Activated CD4-positive, alpha-beta memory T cell treated with anti-CD3 and anti-CD28 coated beads, Interleukin-2, amount 10 ng/mL, durations not matched to agents 7 days and 5 days (primary cell): ENCODE measurements at regions of chr11 and their contacts with region 1.

Region 1: DNA sequence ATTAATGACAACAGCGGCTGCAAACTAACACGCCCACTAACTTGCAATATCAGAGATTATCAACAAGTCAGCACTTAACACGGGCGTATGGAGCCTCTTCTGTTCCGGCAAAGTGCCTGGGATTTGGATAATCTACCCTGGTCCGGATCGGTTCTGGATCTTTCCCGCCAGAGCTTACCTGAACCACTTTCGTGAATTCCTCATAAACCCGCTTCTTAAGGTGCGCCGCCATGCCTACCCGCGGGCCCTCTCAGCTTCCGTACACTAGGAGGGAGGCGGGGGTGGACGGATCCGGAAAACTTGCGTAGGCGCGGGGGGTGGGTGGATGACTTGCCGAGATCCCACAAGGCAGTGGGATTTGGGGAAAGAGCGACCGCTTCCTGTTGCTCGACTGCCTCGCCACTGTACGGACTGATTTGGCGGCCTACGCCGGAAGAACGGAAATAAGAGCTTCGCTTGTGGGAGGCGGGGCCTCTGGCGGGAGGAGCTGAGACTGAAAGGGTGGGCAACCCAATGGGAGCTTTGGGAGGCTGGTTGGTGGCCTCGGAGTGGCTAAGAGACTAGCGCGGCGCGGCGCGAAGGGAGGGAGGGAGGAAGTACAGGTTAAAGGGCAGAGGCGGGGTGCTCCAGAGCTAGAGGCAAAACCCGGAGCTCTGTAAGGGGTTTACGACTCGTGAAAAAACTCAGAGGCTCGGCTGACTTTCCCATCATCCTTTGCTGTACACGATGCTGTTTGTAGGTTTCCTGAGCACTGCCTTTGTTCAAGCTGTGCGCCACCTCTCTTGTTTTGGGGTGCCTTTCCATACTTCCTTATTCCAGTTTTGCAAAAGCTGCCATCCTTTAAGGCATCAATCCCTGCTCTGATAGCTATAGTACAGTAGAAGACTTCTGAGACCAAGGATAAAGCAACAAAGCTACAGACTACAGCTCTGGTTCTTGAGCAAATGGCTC is at the start of gene INTS4:
- DNase-seq: peak; percentile 99
- H3K4me3 Mint-ChIP-seq: peak within 1 kb of the TSS; percentile 92
- H3K27ac Mint-ChIP-seq: peak within 1 kb of the TSS; percentile 82
- H3K4me1 Mint-ChIP-seq: peaks cover 29% of the 10 kb centered on the region
- H3K27me3 Mint-ChIP-seq: no peaks in the 10 kb centered on the region
- total RNA-seq, gene INTS4: 51.2 to 52.0 TPM

Region 2: GRCh38 chr11:77820563-77821348 is 173.9 kb before region 1 on chr11 and contains the starts of genes AAMDC and RSF1:
- CTCF ChIA-PET with region 1: interaction called, 14 read pairs
- POLR2A ChIA-PET with region 1: interaction called, 31 read pairs
- DNase-seq: peak; percentile 97
- H3K4me3 Mint-ChIP-seq: peak within 1 kb of the TSS; percentile 97
- H3K27ac Mint-ChIP-seq: peak within 1 kb of the TSS; percentile 94
- H3K4me1 Mint-ChIP-seq: peaks cover 33% of the 10 kb centered on the region
- H3K27me3 Mint-ChIP-seq: no peaks in the 10 kb centered on the region
- total RNA-seq, gene AAMDC: 14.4 to 15.6 TPM
- total RNA-seq, gene RSF1: 58.6 to 62.5 TPM

Region 3: GRCh38 chr11:77879218-77879617 is 115.5 kb before region 1 on chr11:
- CTCF ChIA-PET with region 1: no interaction called
- POLR2A ChIA-PET with region 1: no interaction called
- DNase-seq: peak; percentile 29
- H3K4me3 Mint-ChIP-seq: no peak overlapping the region
- H3K27ac Mint-ChIP-seq: peak overlapping the region; percentile 67
- H3K4me1 Mint-ChIP-seq: peaks cover 13% of the 10 kb centered on the region
- H3K27me3 Mint-ChIP-seq: no peaks in the 10 kb centered on the region

Region 4: DNA sequence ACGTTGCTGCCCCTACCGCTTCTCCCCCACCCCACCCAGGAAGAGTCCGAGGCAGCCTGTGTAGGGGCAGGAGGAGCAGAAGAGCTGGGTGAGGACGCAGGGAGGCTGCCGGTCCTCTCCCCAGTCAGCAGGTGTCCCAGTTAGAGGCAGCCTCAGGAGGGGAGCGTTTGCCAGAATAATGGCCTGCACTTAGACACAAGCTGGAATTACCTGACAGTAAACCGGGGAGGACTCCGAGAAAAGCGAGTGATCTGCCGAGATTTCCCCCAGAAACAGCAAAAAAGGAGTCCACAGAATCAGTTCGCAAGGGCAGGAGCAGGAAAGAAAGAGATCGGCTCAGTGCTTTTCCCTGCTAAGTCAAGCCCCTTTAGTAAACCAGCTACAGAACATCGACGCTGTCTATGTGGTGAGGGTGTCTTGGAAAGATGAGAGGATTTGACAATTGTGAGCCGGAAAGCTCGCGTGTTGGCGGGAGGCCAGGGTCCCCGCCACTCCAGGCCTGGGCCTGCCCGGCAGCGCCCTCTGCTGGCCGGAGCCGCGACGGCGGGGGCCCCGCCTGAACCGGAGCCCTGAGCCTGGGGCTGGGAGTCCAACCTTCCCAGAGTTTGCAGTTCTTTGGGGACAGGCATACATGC is 51.3 kb after region 1 on chr11:
- CTCF ChIA-PET with region 1: interaction called, 18 read pairs
- POLR2A ChIA-PET with region 1: interaction called, 3 read pairs
- DNase-seq: peak; percentile 73
- H3K4me3 Mint-ChIP-seq: peak overlapping the region; percentile 14
- H3K27ac Mint-ChIP-seq: no peak overlapping the region
- H3K4me1 Mint-ChIP-seq: peaks cover 23% of the 10 kb centered on the region
- H3K27me3 Mint-ChIP-seq: peaks cover 4% of the 10 kb centered on the region

Region 5: GRCh38 chr11:78079232-78080083 is 84.8 kb after region 1 on chr11 and contains the start of gene NDUFC2:
- CTCF ChIA-PET with region 1: interaction called, 6 read pairs
- POLR2A ChIA-PET with region 1: interaction called, 11 read pairs
- DNase-seq: peak; percentile 77
- H3K4me3 Mint-ChIP-seq: peak within 1 kb of the TSS; percentile 94
- H3K27ac Mint-ChIP-seq: peak within 1 kb of the TSS; percentile 88
- H3K4me1 Mint-ChIP-seq: peaks cover 51% of the 10 kb centered on the region
- H3K27me3 Mint-ChIP-seq: no peaks in the 10 kb centered on the region
- total RNA-seq, gene NDUFC2: 204 to 210 TPM

Region 6: GRCh38 chr11:78139422-78140391 is 145.0 kb after region 1 on chr11 and contains the start of gene ALG8:
- CTCF ChIA-PET with region 1: interaction called, 10 read pairs
- POLR2A ChIA-PET with region 1: interaction called, 15 read pairs
- DNase-seq: peak; percentile 96
- H3K4me3 Mint-ChIP-seq: peak within 1 kb of the TSS; percentile 85
- H3K27ac Mint-ChIP-seq: peak within 1 kb of the TSS; percentile 91
- H3K4me1 Mint-ChIP-seq: peaks cover 52% of the 10 kb centered on the region
- H3K27me3 Mint-ChIP-seq: no peaks in the 10 kb centered on the region
- total RNA-seq, gene ALG8: 40.2 to 48.1 TPM